Aorta (tissue), 5 donors: ENCODE measurements at regions of chr18 and their contacts with region 1.

Region 1: GRCh38 chr18:23452728-23453679 is at the start of gene RIOK3:
- DNase-seq: peak; percentile 99
- ATAC-seq: peak; percentile 99
- H3K4me3 ChIP-seq: peak within 1 kb of the TSS; percentile 86 to 99
- H3K27ac ChIP-seq: peak within 1 kb of the TSS; percentile 10 to 95
- H3K4me1 ChIP-seq: peaks cover 0 to under 1% of the 10 kb centered on the region in 2 donors
- H3K27me3 ChIP-seq: no peaks in the 10 kb centered on the region
- total RNA-seq, gene RIOK3: 55.3 to 63.4 TPM

Region 2: GRCh38 chr18:23259701-23260582 is 193.1 kb before region 1 on chr18:
- intact Hi-C with region 1: no loop called
- DNase-seq: peak; percentile 91 to 93
- ATAC-seq: peak; percentile 81
- H3K4me3 ChIP-seq: no peak overlapping the region
- H3K27ac ChIP-seq: peak overlapping the region; percentile 64 to 84
- H3K4me1 ChIP-seq: no peaks in the 10 kb centered on the region
- H3K27me3 ChIP-seq: no peaks in the 10 kb centered on the region

Region 3: DNA sequence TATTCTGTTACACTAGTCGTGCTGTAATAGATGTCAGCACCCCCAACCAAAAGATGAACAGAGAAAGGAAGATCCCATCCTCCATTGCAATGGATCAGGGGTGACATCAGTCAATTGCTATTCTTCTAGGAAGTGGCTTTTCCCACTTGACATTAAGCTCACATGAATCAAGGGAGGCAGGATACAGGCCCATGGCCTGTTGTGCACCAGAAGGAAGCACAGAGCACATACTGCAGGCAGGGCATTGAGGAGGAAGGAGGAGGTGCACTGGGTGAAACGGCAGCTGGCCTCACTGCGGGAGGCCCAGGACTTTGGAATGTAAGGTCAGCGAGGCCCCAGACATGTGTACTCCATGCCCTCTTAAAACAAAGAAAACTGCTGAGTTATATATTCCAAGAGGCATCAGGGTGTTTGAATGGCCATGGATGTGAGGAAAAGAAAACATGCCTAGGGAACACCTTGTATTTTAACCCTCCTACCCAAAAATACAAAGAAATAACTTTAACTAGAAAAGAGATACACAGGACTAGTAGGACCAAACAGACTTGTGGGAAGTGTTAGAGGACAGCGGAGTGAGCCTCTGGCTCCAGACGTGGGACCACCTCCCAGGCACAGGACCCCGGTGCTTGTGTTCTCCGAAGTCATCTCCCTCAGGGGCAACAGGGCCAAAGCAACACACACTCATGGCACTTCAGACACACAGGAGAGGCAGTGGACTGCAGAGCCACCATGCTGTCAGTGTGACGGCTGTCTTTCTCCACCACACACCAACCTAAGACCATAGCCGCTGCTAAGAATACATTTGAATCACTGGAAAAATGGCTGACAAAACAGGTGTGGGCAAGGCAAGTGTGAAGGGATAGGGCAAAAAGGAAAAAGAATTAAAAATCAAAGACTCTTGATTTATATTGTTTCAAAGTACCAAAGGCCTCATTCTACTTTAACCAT is 51.3 kb before region 1 on chr18:
- intact Hi-C with region 1: no loop called
- DNase-seq: no peak
- ATAC-seq: no peak
- H3K4me3 ChIP-seq: no peak overlapping the region
- H3K27ac ChIP-seq: no peak overlapping the region
- H3K4me1 ChIP-seq: no peaks in the 10 kb centered on the region
- H3K27me3 ChIP-seq: no peaks in the 10 kb centered on the region

Region 4: GRCh38 chr18:23487738-23488570 is 35.0 kb after region 1 on chr18:
- intact Hi-C with region 1: loop called in 1 of 2 experiments (anchors 5 kb)
- DNase-seq: peak; percentile 62 to 79
- ATAC-seq: peak; percentile 77
- H3K4me3 ChIP-seq: peak overlapping the region in 1 of 2 donors; percentile 8
- H3K27ac ChIP-seq: peak overlapping the region; percentile 36 to 85
- H3K4me1 ChIP-seq: peaks cover 0 to 4% of the 10 kb centered on the region in 2 donors
- H3K27me3 ChIP-seq: no peaks in the 10 kb centered on the region

Region 5: DNA sequence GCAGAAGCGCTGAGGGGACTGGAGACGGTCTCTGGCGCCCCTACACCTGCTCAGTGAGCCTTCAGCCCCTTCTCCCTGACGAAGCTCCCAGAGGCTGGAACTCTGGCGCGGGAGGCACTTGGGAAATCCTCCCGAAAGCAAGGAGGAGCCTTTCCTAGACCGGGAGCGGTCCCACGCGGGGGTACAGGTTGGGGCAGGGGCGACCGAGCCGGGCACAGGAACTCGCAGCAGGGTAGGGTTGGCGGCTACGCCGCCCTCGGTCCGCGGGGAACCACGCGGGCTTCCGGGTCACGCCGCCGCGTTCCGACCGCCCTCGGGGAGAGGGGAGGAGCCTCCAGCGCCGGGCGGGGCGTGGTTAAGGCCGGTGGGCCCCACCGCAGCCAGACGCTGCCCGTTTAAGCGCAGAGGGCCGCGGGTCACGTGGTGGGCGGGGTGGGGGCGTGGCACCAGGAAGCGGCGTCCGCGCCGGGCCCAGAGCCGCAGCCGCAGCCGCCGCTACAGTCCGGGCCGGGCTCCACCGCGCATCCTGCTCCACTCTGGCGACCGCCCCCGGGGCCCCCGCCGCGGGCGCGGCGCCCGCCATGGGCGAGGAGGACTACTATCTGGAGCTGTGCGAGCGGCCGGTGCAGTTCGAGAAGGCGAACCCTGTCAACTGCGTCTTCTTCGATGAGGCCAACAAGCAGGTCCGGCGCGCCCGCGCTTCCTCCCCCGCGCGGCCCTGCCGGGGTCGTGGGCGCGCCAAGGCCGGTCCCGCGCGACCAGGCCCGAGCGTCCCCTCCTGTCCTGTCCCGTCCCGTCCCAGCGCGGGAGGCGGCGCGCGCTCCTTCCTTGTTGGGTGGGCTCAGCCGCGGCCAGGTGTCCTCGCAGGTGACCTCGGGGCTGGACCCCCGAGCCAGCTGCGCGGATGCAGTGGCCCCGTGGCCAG is 50.3 kb after region 1 on chr18 and contains the start of gene RMC1:
- intact Hi-C with region 1: loop called in 1 of 2 experiments (anchors 5 kb)
- DNase-seq: peak; percentile 99
- ATAC-seq: peak; percentile 99
- H3K4me3 ChIP-seq: peak within 1 kb of the TSS; percentile 83 to 90
- H3K27ac ChIP-seq: peak within 1 kb of the TSS; percentile 52 to 99
- H3K4me1 ChIP-seq: no peaks in the 10 kb centered on the region
- H3K27me3 ChIP-seq: no peaks in the 10 kb centered on the region
- total RNA-seq, gene RMC1: 22.7 to 33.6 TPM

Region 6: GRCh38 chr18:23740105-23740830 is 287.3 kb after region 1 on chr18:
- intact Hi-C with region 1: no loop called
- DNase-seq: no peak
- ATAC-seq: no peak
- H3K4me3 ChIP-seq: no peak overlapping the region
- H3K27ac ChIP-seq: no peak overlapping the region
- H3K4me1 ChIP-seq: no peaks in the 10 kb centered on the region
- H3K27me3 ChIP-seq: no peaks in the 10 kb centered on the region